Naive thymus-derived CD4-positive, alpha-beta T cell (primary cell): ENCODE measurements at regions of chr19 and their contacts with region 1.

Region 1: DNA sequence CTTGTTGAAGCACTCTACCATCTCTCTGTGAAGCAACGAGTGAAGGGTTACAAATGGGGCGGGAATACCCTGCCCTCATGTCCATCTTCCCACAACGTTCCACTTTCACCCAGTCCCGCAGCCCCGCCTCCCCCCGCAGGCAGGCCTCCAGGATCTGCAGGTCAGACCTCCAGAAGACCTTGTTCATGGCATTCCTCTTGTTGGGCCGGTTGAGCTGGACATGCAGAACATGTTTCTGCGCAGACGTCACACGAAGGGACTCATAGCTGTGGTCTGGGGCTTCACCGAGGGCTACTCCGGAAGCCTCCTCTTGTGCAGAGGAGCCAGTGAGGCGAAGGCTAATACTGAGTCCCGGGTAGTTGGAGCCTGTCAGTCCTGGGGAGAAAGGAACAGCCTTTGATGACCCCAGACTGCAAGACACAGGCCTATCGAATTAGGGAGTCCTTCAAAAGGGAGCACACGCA is 420 bp downstream of the ECH1 start:
- DNase-seq: peak in 1 of 9 donors; percentile 48
- ATAC-seq: peak; percentile 20
- H3K4me3 ChIP-seq: peak overlapping the region; percentile 80
- H3K4me3 Mint-ChIP-seq: peak overlapping the region; percentile 90 to 97 (median 94)
- H3K27ac ChIP-seq: peak overlapping the region; percentile 84
- H3K27ac Mint-ChIP-seq: peak overlapping the region; percentile 78 to 97 (median 92)
- H3K4me1 ChIP-seq: peaks cover 12 to 21% of the 10 kb centered on the region in 2 donors
- H3K4me1 Mint-ChIP-seq: peaks cover 14 to 54% (median 38%) of the 10 kb centered on the region in 7 donors
- H3K27me3 ChIP-seq: no peaks in the 10 kb centered on the region
- H3K27me3 Mint-ChIP-seq: no peaks in the 10 kb centered on the region

Region 2: GRCh38 chr19:38315657-38316476 is 515.3 kb before region 1 on chr19 and contains the start of gene YIF1B:
- CTCF ChIA-PET with region 1: no interaction called
- POLR2A ChIA-PET with region 1: no interaction called
- intact Hi-C with region 1: loop called in 1 of 2 experiments (anchors 5 kb)
- DNase-seq: peak; percentile 93 to 97 (median 95)
- ATAC-seq: peak; percentile 95
- H3K4me3 ChIP-seq: peak within 1 kb of the TSS; percentile 90
- H3K4me3 Mint-ChIP-seq: peak within 1 kb of the TSS; percentile 87 to 96 (median 91)
- H3K27ac ChIP-seq: peak within 1 kb of the TSS; percentile 97
- H3K27ac Mint-ChIP-seq: peak within 1 kb of the TSS; percentile 90 to 97 (median 93)
- H3K4me1 ChIP-seq: peaks cover 14 to 30% of the 10 kb centered on the region in 2 donors
- H3K4me1 Mint-ChIP-seq: peaks cover 29 to 57% (median 48%) of the 10 kb centered on the region in 7 donors
- H3K27me3 ChIP-seq: no peaks in the 10 kb centered on the region
- H3K27me3 Mint-ChIP-seq: no peaks in the 10 kb centered on the region
- total RNA-seq, gene YIF1B: 26.1 to 84.7 (median 38.0) TPM

Region 3: GRCh38 chr19:38634757-38635482 is 196.3 kb before region 1 on chr19:
- CTCF ChIA-PET with region 1: no interaction called
- POLR2A ChIA-PET with region 1: no interaction called
- intact Hi-C with region 1: loop called in 1 of 2 experiments (anchors 1 kb)
- DNase-seq: peak; percentile 42 to 79 (median 58)
- ATAC-seq: peak; percentile 64
- H3K4me3 ChIP-seq: no peak overlapping the region
- H3K4me3 Mint-ChIP-seq: peak overlapping the region in 9 of 10 donors; percentile 21 to 65 (median 47)
- H3K27ac ChIP-seq: no peak overlapping the region
- H3K27ac Mint-ChIP-seq: peak overlapping the region; percentile 2 to 81 (median 69)
- H3K4me1 ChIP-seq: peaks cover 23 to 24% of the 10 kb centered on the region in 2 donors
- H3K4me1 Mint-ChIP-seq: peaks cover 14 to 40% (median 35%) of the 10 kb centered on the region in 7 donors
- H3K27me3 ChIP-seq: no peaks in the 10 kb centered on the region
- H3K27me3 Mint-ChIP-seq: no peaks in the 10 kb centered on the region

Region 4: GRCh38 chr19:38683393-38684080 is 147.6 kb before region 1 on chr19:
- CTCF ChIA-PET with region 1: no interaction called
- POLR2A ChIA-PET with region 1: no interaction called
- intact Hi-C with region 1: no loop called
- DNase-seq: peak in 1 of 9 donors; percentile 37
- ATAC-seq: peak; percentile 58
- H3K4me3 ChIP-seq: no peak overlapping the region
- H3K4me3 Mint-ChIP-seq: peak overlapping the region in 1 of 10 donors; percentile 38
- H3K27ac ChIP-seq: no peak overlapping the region
- H3K27ac Mint-ChIP-seq: peak overlapping the region in 1 of 9 donors; percentile 75
- H3K4me1 ChIP-seq: peaks cover 18 to 84% of the 10 kb centered on the region in 2 donors
- H3K4me1 Mint-ChIP-seq: peaks cover 33 to 88% (median 55%) of the 10 kb centered on the region in 7 donors
- H3K27me3 ChIP-seq: no peaks in the 10 kb centered on the region
- H3K27me3 Mint-ChIP-seq: no peaks in the 10 kb centered on the region

Region 5: GRCh38 chr19:38736413-38737280 is 94.5 kb before region 1 on chr19:
- CTCF ChIA-PET with region 1: no interaction called
- POLR2A ChIA-PET with region 1: no interaction called
- intact Hi-C with region 1: loop called (anchors 2 to 5 kb)
- DNase-seq: peak in 6 of 9 donors; percentile 31 to 69 (median 41)
- ATAC-seq: peak; percentile 63
- H3K4me3 ChIP-seq: peak overlapping the region; percentile 24
- H3K4me3 Mint-ChIP-seq: peak overlapping the region; percentile 35 to 83 (median 62)
- H3K27ac ChIP-seq: no peak overlapping the region
- H3K27ac Mint-ChIP-seq: peak overlapping the region in 5 of 9 donors; percentile 13 to 76 (median 36)
- H3K4me1 ChIP-seq: peaks cover 15 to 27% of the 10 kb centered on the region in 2 donors
- H3K4me1 Mint-ChIP-seq: peaks cover 7 to 47% (median 29%) of the 10 kb centered on the region in 7 donors
- H3K27me3 ChIP-seq: no peaks in the 10 kb centered on the region
- H3K27me3 Mint-ChIP-seq: peaks cover 0 to 10% (median 0%) of the 10 kb centered on the region in 5 donors

Region 6: GRCh38 chr19:38842439-38843174 is 11.4 kb after region 1 on chr19:
- CTCF ChIA-PET with region 1: interaction called, 3 read pairs
- POLR2A ChIA-PET with region 1: interaction called, 34 read pairs
- intact Hi-C with region 1: loop called in 1 of 2 experiments (anchors 1 kb)
- DNase-seq: peak in 6 of 9 donors; percentile 57 to 80 (median 76)
- ATAC-seq: peak; percentile 80
- H3K4me3 ChIP-seq: peak overlapping the region; percentile 24
- H3K4me3 Mint-ChIP-seq: peak overlapping the region; percentile 67 to 93 (median 83)
- H3K27ac ChIP-seq: peak overlapping the region; percentile 67
- H3K27ac Mint-ChIP-seq: peak overlapping the region; percentile 89 to 99 (median 92)
- H3K4me1 ChIP-seq: peaks cover 45 to 66% of the 10 kb centered on the region in 2 donors
- H3K4me1 Mint-ChIP-seq: peaks cover 50 to 83% (median 73%) of the 10 kb centered on the region in 7 donors
- H3K27me3 ChIP-seq: no peaks in the 10 kb centered on the region
- H3K27me3 Mint-ChIP-seq: no peaks in the 10 kb centered on the region

Region 7: GRCh38 chr19:38869856-38870607 is 38.9 kb after region 1 on chr19:
- CTCF ChIA-PET with region 1: no interaction called
- POLR2A ChIA-PET with region 1: interaction called, 6 read pairs
- intact Hi-C with region 1: loop called (anchors 1 to 5 kb)
- DNase-seq: peak; percentile 90 to 96 (median 94)
- ATAC-seq: peak; percentile 98
- H3K4me3 ChIP-seq: peak overlapping the region; percentile 85
- H3K4me3 Mint-ChIP-seq: peak overlapping the region; percentile 84 to 94 (median 91)
- H3K27ac ChIP-seq: peak overlapping the region; percentile 77
- H3K27ac Mint-ChIP-seq: peak overlapping the region; percentile 73 to 97 (median 88)
- H3K4me1 ChIP-seq: peaks cover 26 to 31% of the 10 kb centered on the region in 2 donors
- H3K4me1 Mint-ChIP-seq: peaks cover 26 to 63% (median 41%) of the 10 kb centered on the region in 7 donors
- H3K27me3 ChIP-seq: no peaks in the 10 kb centered on the region
- H3K27me3 Mint-ChIP-seq: no peaks in the 10 kb centered on the region

Region 8: DNA sequence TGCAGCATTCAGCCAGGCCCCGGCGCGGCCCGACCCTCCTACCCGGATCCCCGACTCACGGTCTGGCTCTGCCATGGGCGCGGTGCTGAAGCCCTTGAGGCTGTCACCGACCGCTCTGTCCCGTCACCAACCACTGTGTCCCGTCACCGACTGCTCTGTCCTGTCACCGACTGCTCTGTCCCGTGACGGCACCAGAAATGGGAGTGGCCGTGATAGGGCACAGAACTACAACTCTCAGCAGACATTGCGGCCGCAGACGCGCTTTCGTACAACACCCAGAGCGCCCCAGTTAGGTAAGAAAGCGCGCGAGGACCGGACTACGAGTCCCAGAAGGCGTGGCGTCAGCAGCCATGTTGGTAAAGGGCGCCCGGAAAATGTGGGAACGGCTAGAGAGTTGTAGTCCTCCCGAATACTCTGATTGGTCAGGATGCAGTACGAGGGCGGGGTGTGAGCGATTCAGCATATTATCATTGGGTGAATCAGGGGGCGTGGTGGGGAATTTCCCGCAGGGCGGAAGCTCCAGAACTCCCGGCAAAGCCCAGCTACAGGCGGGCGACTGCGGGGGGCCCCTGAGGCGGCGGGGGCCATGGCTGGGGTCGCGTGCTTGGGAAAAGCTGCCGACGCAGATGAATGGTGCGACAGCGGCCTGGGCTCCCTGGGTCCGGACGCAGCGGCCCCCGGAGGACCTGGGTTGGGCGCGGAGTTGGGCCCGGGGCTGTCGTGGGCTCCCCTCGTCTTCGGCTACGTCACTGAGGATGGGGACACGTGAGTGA is 68.5 kb after region 1 on chr19 and contains the starts of genes NFKBIB and SIRT2:
- CTCF ChIA-PET with region 1: interaction called, 3 read pairs
- POLR2A ChIA-PET with region 1: interaction called, 4 read pairs
- intact Hi-C with region 1: loop called (anchors 1 kb)
- DNase-seq: peak; percentile 86 to 100 (median 99)
- ATAC-seq: peak; percentile 93
- H3K4me3 ChIP-seq: peak within 1 kb of the TSS; percentile 74
- H3K4me3 Mint-ChIP-seq: peak within 1 kb of the TSS; percentile 88 to 100 (median 96)
- H3K27ac ChIP-seq: peak within 1 kb of the TSS; percentile 97
- H3K27ac Mint-ChIP-seq: peak within 1 kb of the TSS; percentile 86 to 99 (median 94)
- H3K4me1 ChIP-seq: peaks cover 15 to 29% of the 10 kb centered on the region in 2 donors
- H3K4me1 Mint-ChIP-seq: peaks cover 27 to 74% (median 50%) of the 10 kb centered on the region in 7 donors
- H3K27me3 ChIP-seq: no peaks in the 10 kb centered on the region
- H3K27me3 Mint-ChIP-seq: no peaks in the 10 kb centered on the region
- total RNA-seq, gene NFKBIB: 21.7 to 51.8 (median 34.1) TPM
- total RNA-seq, gene SIRT2: 42.9 to 78.5 (median 54.0) TPM